Breast epithelium (tissue), 4 donors: ENCODE measurements at regions of chr17 and their contacts with region 1.

Region 1: DNA sequence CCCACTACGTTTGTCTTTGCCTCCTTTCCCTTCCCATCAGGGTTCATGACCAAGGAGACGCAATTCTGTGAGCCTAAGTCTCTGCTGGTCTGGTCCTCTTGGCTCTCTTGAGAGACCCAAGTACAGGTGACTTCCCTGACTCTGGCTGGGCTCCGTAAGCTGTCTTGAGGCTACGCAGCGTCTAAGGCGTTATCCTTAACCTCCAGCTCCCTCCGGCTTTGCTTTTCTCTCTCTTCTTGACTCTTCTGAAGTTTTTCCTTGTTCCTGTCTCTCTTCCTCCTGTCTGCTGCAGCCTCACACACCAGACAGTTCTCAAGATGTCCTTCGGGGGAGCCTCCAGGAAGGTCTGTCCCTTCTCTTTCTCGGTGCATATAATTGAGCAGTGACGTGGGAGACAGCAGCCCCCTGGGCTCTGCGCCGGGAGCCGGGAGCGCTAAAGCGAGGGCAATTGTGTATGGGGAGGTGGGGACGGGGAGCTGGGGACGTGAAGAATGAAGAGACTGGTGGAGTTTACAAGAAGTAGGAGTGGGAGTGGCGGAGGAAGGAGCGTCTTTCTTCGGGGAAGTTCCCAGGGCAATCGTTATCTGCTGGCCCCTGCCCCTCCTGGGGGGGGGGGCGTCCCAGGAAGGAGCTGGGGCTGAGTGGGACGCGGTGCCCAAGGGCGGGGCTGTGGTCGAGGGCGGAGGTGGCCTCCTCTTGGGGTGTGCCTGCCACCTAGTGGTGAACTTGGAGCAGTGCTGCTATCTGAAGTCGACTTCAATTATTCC is 6.9 kb upstream of the PIRT start:
- DNase-seq: peak; percentile 48 to 79
- H3K4me3 ChIP-seq: peak overlapping the region; percentile 41 to 64 (median 54)
- H3K27ac ChIP-seq: peak overlapping the region; percentile 44 to 59
- H3K4me1 ChIP-seq: no peaks in the 10 kb centered on the region
- H3K27me3 ChIP-seq: no peaks in the 10 kb centered on the region
- CTCF ChIP-seq: peak; percentile 95 to 99 (median 97)
- POLR2A ChIP-seq: no peak

Region 2: DNA sequence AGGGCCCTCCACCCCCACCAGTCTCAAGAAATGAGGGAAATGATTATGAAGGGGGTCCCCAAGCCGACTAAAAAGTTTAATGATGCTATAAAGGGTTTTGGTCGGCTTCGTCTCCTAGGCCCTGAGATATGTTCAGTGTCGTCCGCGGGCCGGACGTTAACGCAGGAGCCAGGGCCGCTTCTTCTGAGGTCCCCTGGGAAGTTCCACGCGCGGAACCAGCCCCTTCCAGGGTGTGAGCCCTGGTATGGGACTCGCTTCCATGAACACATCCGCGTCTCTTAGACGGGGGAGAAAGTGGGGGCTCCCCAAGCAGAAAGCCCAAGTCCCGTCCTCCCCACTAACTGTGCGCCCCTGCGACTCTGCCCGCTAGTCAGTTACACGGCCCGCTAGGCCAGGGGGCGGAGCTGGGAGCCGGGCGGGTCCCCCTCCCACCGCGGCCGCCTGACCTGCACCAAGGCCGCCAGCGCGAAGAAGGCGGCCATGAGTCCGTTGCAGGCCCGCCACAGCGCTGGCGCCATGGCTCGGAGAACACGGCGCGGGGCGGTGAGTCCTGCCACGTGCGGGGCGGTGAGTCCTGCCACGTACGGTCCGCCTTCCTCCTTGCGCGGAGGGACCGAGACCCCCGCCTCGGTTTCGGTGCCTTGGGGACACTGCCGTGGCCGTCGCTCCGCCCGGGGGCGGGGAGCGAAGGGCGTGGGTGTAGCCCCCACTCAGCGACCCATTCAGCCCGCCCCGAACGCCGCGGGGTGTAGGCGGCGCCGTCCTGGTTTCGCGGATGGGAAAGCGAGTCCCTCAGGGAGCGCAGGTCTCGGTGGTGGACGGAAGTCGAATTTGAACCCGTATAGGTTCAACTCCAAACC is 115.2 kb before region 1 on chr17 and contains the start of gene TMEM220:
- intact Hi-C with region 1: loop called (anchors 10 kb)
- DNase-seq: peak; percentile 68 to 73
- H3K4me3 ChIP-seq: peak within 1 kb of the TSS; percentile 48 to 94 (median 76)
- H3K27ac ChIP-seq: peak within 1 kb of the TSS; percentile 91 to 99
- H3K4me1 ChIP-seq: no peaks in the 10 kb centered on the region
- H3K27me3 ChIP-seq: no peaks in the 10 kb centered on the region
- CTCF ChIP-seq: peak in 1 of 3 donors; percentile 11
- POLR2A ChIP-seq: peak; percentile 39
- total RNA-seq, gene TMEM220: 8.5 to 13.4 (median 9.5) TPM

Region 3: DNA sequence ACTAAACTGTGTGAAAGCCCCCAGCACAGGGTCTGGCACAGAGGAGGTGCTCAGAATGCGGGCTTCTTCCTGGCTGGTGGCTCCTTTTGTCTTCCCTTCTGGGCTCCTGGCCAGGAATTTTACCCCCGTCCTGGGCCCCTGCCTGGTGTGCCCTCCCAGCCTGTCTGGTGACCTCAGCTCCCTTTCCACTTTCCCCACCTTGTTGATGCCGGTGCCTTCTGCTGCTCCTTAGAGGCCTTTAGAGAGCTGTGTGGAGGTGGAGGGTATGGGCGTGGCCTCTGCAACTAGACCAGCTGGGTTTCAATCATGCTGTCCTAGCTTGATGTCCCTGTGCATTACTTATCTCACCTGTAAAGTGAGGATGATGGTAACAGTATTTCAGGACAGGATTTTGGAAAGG is 23.7 kb before region 1 on chr17:
- intact Hi-C with region 1: no loop called
- DNase-seq: no peak
- H3K4me3 ChIP-seq: no peak overlapping the region
- H3K27ac ChIP-seq: no peak overlapping the region
- H3K4me1 ChIP-seq: no peaks in the 10 kb centered on the region
- H3K27me3 ChIP-seq: peaks cover 0 to 3% of the 10 kb centered on the region in 2 donors
- CTCF ChIP-seq: no peak
- POLR2A ChIP-seq: no peak

Region 4: GRCh38 chr17:10875979-10876555 is 31.3 kb after region 1 on chr17:
- intact Hi-C with region 1: loop called (anchors 1 kb)
- DNase-seq: no peak
- H3K4me3 ChIP-seq: no peak overlapping the region
- H3K27ac ChIP-seq: no peak overlapping the region
- H3K4me1 ChIP-seq: no peaks in the 10 kb centered on the region
- H3K27me3 ChIP-seq: no peaks in the 10 kb centered on the region
- CTCF ChIP-seq: peak; percentile 47 to 68 (median 65)
- POLR2A ChIP-seq: no peak